Activated CD4-positive, alpha-beta memory T cell treated with anti-CD3 and anti-CD28 coated beads, Interleukin-2, amount 10 ng/mL, durations not matched to agents 7 days and 5 days (primary cell): ENCODE measurements at regions of chr4 and their contacts with region 1.

Region 1: DNA sequence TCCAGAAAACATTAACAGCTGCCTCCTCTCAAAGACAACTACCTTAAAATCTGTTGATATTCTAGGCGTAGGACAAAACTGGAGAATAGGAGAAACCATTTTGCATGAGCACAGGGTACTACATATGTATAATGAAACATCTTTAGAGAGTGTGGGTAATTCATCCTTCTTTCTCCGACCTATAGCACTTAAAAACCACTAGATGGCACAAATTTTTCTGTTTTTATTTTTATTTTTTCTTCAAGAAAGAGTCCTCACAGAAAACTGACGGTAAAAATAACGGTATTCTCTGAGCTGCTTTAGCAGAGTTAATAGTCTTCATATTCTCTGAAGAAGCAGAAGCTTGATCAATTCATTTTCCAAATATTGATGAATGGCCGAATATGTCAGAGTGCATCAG is 14.6 kb downstream of the SMIM31 start:
- DNase-seq: no peak
- H3K4me3 Mint-ChIP-seq: no peak overlapping the region
- H3K27ac Mint-ChIP-seq: no peak overlapping the region
- H3K4me1 Mint-ChIP-seq: no peaks in the 10 kb centered on the region
- H3K27me3 Mint-ChIP-seq: peaks cover 13% of the 10 kb centered on the region

Region 2: DNA sequence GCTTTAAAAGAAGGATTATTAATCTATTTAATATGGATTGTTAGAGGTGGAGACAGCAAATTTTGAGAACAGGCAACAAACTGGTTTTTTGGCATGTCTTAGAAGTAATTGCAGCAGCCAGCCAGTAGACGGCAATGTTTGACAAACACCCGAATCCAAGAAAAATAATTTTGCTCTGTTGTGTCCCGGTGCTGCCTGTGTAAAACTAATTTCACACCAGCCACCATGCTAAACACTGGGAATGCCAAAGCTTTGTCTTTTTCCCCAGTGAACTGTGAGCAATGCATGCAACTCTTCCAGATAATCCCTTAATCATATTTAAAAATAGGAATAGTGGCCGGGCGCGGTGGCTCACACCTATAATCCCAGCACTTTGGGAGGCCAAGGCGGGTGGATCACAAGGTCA is 11.3 kb after region 1 on chr4:
- CTCF ChIA-PET with region 1: interaction called, 10 read pairs
- POLR2A ChIA-PET with region 1: no interaction called
- DNase-seq: no peak
- H3K4me3 Mint-ChIP-seq: no peak overlapping the region
- H3K27ac Mint-ChIP-seq: no peak overlapping the region
- H3K4me1 Mint-ChIP-seq: no peaks in the 10 kb centered on the region
- H3K27me3 Mint-ChIP-seq: peaks cover 10% of the 10 kb centered on the region

Region 3: GRCh38 chr4:164821711-164822110 is 53.2 kb after region 1 on chr4:
- CTCF ChIA-PET with region 1: no interaction called
- POLR2A ChIA-PET with region 1: no interaction called
- DNase-seq: no peak
- H3K4me3 Mint-ChIP-seq: no peak overlapping the region
- H3K27ac Mint-ChIP-seq: no peak overlapping the region
- H3K4me1 Mint-ChIP-seq: no peaks in the 10 kb centered on the region
- H3K27me3 Mint-ChIP-seq: no peaks in the 10 kb centered on the region

Region 4: DNA sequence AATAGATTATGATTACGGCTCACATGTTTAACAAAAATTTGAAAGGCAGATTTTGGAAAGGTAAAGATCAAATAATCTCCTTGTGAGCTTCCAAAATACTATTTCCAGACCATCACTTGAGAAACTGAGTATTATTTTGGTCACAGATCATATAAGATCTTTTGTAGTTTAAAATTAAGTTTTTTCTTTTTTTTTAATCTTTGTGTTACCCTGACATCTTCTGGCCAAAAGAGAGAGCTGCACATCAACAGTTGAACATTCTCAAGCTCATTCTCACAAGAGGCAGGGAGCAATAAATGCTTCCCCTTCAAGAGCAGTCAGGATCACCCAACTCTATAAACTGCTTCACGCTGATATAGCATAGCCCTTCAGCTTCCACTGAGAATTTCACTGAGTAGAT is 328.3 kb after region 1 on chr4:
- CTCF ChIA-PET with region 1: interaction called, 17 read pairs
- POLR2A ChIA-PET with region 1: no interaction called
- DNase-seq: no peak
- H3K4me3 Mint-ChIP-seq: no peak overlapping the region
- H3K27ac Mint-ChIP-seq: no peak overlapping the region
- H3K4me1 Mint-ChIP-seq: no peaks in the 10 kb centered on the region
- H3K27me3 Mint-ChIP-seq: no peaks in the 10 kb centered on the region